OCI-LY7 (cell line): ENCODE measurements at regions of chr15 and their contacts with region 1.

Region 1: DNA sequence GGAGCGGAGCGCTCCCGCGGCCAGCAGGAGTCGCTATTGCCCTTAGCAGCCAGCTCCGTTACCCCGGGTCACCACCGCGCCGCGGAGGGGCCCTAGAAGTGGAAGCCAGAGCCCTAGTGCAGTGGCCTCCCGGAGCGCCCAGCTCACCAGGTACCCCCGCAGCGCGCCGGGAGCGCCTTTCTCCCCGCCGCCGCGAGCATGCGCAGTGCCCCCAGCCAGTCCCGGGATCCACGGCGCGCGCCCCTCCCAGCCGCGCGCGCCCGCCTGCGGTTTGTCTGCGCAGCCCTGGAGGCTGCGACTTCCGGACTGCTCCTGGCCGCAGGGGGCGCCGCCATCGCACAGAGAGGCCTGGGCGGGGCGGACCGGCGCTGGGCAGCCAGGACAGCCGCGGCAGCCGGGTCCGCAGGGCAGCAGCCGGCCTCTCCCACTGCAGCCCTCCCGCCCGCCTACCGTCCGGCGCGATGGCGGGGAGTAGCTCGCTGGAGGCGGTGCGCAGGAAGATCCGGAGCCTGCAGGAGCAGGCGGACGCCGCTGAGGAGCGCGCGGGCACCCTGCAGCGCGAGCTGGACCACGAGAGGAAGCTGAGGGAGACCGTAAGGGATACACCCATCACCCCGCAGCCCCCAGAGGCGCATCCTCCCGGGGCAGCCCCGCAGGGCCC is 5.7 kb downstream of the TPM1 start:
- DNase-seq: peak; percentile 88
- H3K4me3 ChIP-seq: peak overlapping the region; percentile 89
- H3K27ac ChIP-seq: no peak overlapping the region
- H3K4me1 ChIP-seq: peaks cover 20% of the 10 kb centered on the region
- CTCF ChIP-seq: peak; percentile 94

Region 2: DNA sequence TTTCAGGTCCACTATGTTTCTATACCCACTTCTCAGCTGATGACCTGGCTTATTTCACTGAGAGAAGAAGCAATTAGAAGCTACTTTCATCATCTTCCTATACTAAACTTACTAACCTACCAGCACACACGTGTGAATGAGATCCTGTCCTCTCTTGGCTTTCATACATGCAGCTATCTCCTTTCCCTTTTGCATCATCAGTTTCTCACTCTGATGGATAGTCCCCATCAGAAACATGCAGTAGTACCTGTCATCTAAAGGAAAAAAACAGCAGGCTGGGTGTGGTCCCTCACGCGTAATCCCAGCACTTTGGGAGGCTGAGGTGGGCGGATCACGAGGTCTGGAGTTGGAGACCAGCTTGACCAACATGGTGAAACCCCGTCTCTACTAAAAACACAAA is 645.6 kb before region 1 on chr15:
- CTCF ChIA-PET with region 1: interaction called, 10 read pairs
- POLR2A ChIA-PET with region 1: no interaction called
- intact Hi-C with region 1: no loop called
- DNase-seq: no peak
- H3K4me3 ChIP-seq: no peak overlapping the region
- H3K27ac ChIP-seq: no peak overlapping the region
- H3K4me1 ChIP-seq: no peaks in the 10 kb centered on the region
- CTCF ChIP-seq: no peak

Region 3: GRCh38 chr15:62985768-62986167 is 62.5 kb before region 1 on chr15:
- CTCF ChIA-PET with region 1: no interaction called
- POLR2A ChIA-PET with region 1: no interaction called
- intact Hi-C with region 1: no loop called
- DNase-seq: no peak
- H3K4me3 ChIP-seq: no peak overlapping the region
- H3K27ac ChIP-seq: no peak overlapping the region
- H3K4me1 ChIP-seq: no peaks in the 10 kb centered on the region
- CTCF ChIP-seq: no peak